ENCODE measurements at regions of chr14 and their contacts with region 1.

Region 1: GRCh38 chr14:89954070-89955028 is at the start of gene EFCAB11:
- DNase-seq: peak; percentile 80 to 98 (median 97)
- ATAC-seq: peak; percentile 90
- H3K4me3 ChIP-seq: peak within 1 kb of the TSS; percentile 72
- H3K4me3 Mint-ChIP-seq: peak within 1 kb of the TSS; percentile 74 to 98 (median 94)
- H3K27ac ChIP-seq: peak within 1 kb of the TSS; percentile 94
- H3K27ac Mint-ChIP-seq: peak within 1 kb of the TSS; percentile 82 to 98 (median 91)
- H3K4me1 ChIP-seq: peaks cover 16 to 21% of the 10 kb centered on the region in 2 donors
- H3K4me1 Mint-ChIP-seq: peaks cover 21 to 54% (median 43%) of the 10 kb centered on the region in 7 donors
- H3K27me3 ChIP-seq: no peaks in the 10 kb centered on the region
- H3K27me3 Mint-ChIP-seq: no peaks in the 10 kb centered on the region
- total RNA-seq, gene EFCAB11: 1.2 to 8.5 (median 1.9) TPM

Region 2: GRCh38 chr14:88385345-88386101 is 1568.8 kb before region 1 on chr14 and contains the start of gene SPATA7:
- CTCF ChIA-PET with region 1: no interaction called
- POLR2A ChIA-PET with region 1: no interaction called
- intact Hi-C with region 1: loop called in 1 of 2 experiments (anchors 10 kb)
- DNase-seq: peak; percentile 45 to 79 (median 62)
- ATAC-seq: peak; percentile 95
- H3K4me3 ChIP-seq: peak within 1 kb of the TSS; percentile 85
- H3K4me3 Mint-ChIP-seq: peak within 1 kb of the TSS; percentile 93 to 97 (median 94)
- H3K27ac ChIP-seq: peak within 1 kb of the TSS; percentile 75
- H3K27ac Mint-ChIP-seq: peak within 1 kb of the TSS; percentile 68 to 88 (median 83)
- H3K4me1 ChIP-seq: peaks cover 7 to 9% of the 10 kb centered on the region in 2 donors
- H3K4me1 Mint-ChIP-seq: peaks cover 6 to 29% (median 20%) of the 10 kb centered on the region in 7 donors
- H3K27me3 ChIP-seq: no peaks in the 10 kb centered on the region
- H3K27me3 Mint-ChIP-seq: peaks cover 0 to 23% (median 0%) of the 10 kb centered on the region in 5 donors
- total RNA-seq, gene SPATA7: 1.9 to 4.3 (median 2.5) TPM

Region 3: DNA sequence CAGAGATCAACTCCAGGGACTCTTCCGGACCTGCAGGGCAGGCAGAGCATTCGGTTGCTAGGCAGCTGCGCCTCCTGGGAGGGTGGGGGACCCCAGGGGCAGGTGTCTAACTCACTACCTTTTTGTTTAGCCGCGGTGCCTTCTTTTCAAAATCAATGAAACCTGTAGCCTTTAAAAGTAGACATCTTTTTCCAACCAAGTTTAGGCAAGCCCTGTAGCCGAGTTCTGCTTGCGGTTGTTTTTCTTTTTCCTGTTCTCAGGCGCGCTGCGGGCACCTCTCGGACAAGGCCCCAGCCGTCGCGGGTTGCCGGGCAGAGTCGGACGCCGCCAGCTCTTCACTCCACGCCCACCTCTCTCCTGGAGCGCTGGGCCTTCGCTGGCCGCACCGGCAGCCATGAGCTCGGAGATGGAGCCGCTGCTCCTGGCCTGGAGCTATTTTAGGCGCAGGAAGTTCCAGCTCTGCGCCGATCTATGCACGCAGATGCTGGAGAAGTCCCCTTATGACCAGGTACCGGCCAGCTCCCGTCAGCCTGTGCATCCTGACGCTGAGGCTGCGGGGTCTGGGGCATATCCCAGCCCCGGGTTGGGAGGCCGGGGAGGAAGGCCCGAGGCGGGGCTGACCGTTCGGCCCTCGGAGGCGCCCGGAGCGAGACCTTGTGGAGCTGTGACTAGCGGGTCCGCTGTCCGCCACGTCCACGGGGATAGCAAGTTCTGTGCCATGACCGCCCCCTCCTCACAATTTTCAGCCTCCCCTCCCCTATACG is 1129.9 kb before region 1 on chr14 and contains the start of gene TTC8:
- CTCF ChIA-PET with region 1: no interaction called
- POLR2A ChIA-PET with region 1: no interaction called
- intact Hi-C with region 1: loop called in 1 of 2 experiments (anchors 5 kb)
- DNase-seq: peak; percentile 75 to 92 (median 88)
- ATAC-seq: peak; percentile 98
- H3K4me3 ChIP-seq: peak within 1 kb of the TSS; percentile 74
- H3K4me3 Mint-ChIP-seq: peak within 1 kb of the TSS; percentile 72 to 98 (median 90)
- H3K27ac ChIP-seq: peak within 1 kb of the TSS; percentile 85
- H3K27ac Mint-ChIP-seq: peak within 1 kb of the TSS; percentile 97 to 99 (median 99)
- H3K4me1 ChIP-seq: peaks cover 5 to 6% of the 10 kb centered on the region in 2 donors
- H3K4me1 Mint-ChIP-seq: peaks cover 0 to 13% (median 11%) of the 10 kb centered on the region in 7 donors
- H3K27me3 ChIP-seq: no peaks in the 10 kb centered on the region
- H3K27me3 Mint-ChIP-seq: peaks cover 0 to 30% (median 8%) of the 10 kb centered on the region in 5 donors
- total RNA-seq, gene TTC8: 1.8 to 3.4 (median 2.1) TPM

Region 4: DNA sequence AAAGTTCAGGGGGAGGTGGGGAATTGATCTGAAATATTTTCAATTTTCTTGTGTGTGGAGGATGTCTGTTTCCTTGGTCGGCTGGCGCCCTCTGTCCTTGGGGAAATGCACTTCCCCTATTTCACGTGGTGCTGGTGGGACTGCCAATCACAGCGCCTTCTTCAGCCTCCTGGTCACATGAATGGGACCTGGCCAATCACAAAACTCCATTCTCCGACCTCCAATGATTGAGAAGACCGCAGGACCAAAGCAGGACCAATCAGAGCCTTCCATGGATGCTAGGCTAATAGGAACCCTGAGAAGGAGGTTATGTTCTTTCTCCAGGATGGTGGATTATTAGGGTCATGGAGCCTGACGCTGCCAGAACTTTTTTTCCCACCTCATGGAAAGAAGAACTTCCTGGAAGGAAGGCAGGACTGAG is 941.3 kb before region 1 on chr14:
- CTCF ChIA-PET with region 1: no interaction called
- POLR2A ChIA-PET with region 1: no interaction called
- intact Hi-C with region 1: no loop called
- DNase-seq: peak in 1 of 9 donors; percentile 12
- ATAC-seq: no peak
- H3K4me3 ChIP-seq: no peak overlapping the region
- H3K4me3 Mint-ChIP-seq: no peak overlapping the region
- H3K27ac ChIP-seq: no peak overlapping the region
- H3K27ac Mint-ChIP-seq: no peak overlapping the region
- H3K4me1 ChIP-seq: no peaks in the 10 kb centered on the region
- H3K4me1 Mint-ChIP-seq: peaks cover 0 to 4% (median 0%) of the 10 kb centered on the region in 7 donors
- H3K27me3 ChIP-seq: no peaks in the 10 kb centered on the region
- H3K27me3 Mint-ChIP-seq: peaks cover 14 to 24% (median 15%) of the 10 kb centered on the region in 5 donors

Region 5: GRCh38 chr14:89973234-89973823 is 19.0 kb after region 1 on chr14:
- CTCF ChIA-PET with region 1: interaction called, 17 read pairs
- POLR2A ChIA-PET with region 1: interaction called, 16 read pairs
- intact Hi-C with region 1: loop called (anchors 1 kb)
- DNase-seq: peak in 7 of 9 donors; percentile 21 to 44 (median 37)
- ATAC-seq: peak; percentile 76
- H3K4me3 ChIP-seq: no peak overlapping the region
- H3K4me3 Mint-ChIP-seq: no peak overlapping the region
- H3K27ac ChIP-seq: no peak overlapping the region
- H3K27ac Mint-ChIP-seq: no peak overlapping the region
- H3K4me1 ChIP-seq: no peaks in the 10 kb centered on the region
- H3K4me1 Mint-ChIP-seq: peaks cover 0 to 19% (median 3%) of the 10 kb centered on the region in 7 donors
- H3K27me3 ChIP-seq: no peaks in the 10 kb centered on the region
- H3K27me3 Mint-ChIP-seq: no peaks in the 10 kb centered on the region

Region 6: DNA sequence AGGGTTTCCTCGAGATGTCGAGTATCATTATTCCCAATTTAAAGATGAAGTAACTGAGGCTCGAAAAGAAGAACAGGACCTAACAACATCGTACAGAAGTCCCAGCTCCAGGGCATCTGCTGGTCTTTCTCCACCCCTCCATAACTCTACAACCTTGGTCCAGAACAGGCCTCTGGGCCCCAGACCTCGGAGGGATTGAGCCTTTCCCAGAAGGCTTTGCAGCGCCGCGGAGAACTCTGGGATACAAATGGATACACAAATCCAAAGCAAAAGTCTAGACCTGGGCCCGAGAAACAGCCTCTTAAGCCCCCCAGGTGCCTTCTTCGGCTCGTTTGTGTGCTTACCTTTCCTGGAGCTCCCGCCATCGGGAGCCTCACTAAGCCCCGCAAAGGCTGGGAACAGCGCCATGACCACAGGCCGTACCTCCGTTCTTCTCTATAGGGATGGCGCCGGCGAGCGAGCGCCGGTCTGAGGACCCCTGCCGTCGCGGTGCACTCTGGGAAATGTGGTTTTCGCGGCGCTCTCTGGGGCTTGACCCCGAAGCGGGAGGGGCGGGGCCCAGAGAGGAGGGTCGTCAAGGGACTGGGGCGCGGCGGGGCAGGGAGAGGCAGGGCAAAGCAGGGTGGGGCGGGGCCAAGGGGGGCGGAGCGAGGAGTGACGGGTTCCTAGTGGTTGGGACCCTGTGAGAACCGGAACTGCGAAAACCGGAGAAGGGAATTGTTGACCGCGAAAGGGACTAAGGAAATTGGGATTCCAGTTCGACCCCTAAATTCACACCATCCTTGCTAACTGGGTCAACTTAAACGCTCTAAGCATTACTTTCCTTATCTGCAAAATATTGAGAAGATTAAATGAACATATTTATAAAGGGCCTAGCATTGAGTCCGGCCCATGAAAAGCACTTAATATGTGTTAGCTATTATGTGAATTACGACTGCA is 377.4 kb after region 1 on chr14 and contains the start of gene NRDE2:
- CTCF ChIA-PET with region 1: no interaction called
- POLR2A ChIA-PET with region 1: no interaction called
- intact Hi-C with region 1: loop called (anchors 1 kb)
- DNase-seq: peak; percentile 74 to 95 (median 85)
- ATAC-seq: peak; percentile 99
- H3K4me3 ChIP-seq: peak within 1 kb of the TSS; percentile 91
- H3K4me3 Mint-ChIP-seq: peak within 1 kb of the TSS; percentile 90 to 95 (median 93)
- H3K27ac ChIP-seq: peak within 1 kb of the TSS; percentile 72
- H3K27ac Mint-ChIP-seq: peak within 1 kb of the TSS; percentile 86 to 97 (median 92)
- H3K4me1 ChIP-seq: peaks cover 0 to 9% of the 10 kb centered on the region in 2 donors
- H3K4me1 Mint-ChIP-seq: peaks cover 14 to 44% (median 38%) of the 10 kb centered on the region in 7 donors
- H3K27me3 ChIP-seq: no peaks in the 10 kb centered on the region
- H3K27me3 Mint-ChIP-seq: peaks cover 7 to 25% (median 9%) of the 10 kb centered on the region in 5 donors
- total RNA-seq, gene NRDE2: 23.6 to 30.2 (median 28.7) TPM

Region 7: DNA sequence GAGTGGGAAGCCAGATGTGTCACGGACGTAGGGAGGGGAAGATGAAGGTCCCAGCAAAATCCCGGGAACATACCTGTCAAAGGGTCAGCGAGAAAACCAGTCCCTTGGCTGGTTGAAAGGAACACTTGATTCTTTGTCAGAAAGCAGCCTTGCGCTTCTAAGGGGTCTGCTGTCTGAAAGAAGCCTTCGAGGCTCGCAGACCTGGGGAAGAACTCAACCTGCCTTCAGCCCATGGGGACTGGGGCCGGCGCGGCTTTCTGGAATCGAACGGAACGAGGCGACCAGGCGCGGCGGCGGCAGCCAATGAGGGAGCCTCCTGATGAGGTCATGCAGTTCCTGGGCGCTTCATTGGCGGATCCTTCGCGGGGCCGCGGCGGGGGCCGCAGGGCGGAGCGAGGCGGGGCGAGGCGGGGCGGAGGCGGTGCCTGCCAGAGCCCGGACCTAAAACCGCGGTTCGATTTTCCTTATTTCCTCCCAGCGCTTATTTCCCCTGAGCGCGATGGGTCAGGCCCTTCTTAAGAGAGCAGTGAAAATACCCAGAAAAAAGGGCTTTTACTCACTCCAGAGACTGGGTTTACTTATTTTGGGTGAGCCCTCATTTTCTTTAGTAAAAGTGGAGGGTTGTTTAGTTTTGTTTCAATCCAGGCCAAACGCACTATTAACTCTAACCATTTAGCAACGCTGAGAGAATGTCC is 873.7 kb after region 1 on chr14:
- CTCF ChIA-PET with region 1: no interaction called
- POLR2A ChIA-PET with region 1: no interaction called
- intact Hi-C with region 1: loop called (anchors 10 kb)
- DNase-seq: peak; percentile 83 to 94 (median 85)
- ATAC-seq: peak; percentile 100
- H3K4me3 ChIP-seq: peak overlapping the region; percentile 61
- H3K4me3 Mint-ChIP-seq: peak overlapping the region; percentile 69 to 91 (median 84)
- H3K27ac ChIP-seq: peak overlapping the region; percentile 69
- H3K27ac Mint-ChIP-seq: peak overlapping the region; percentile 79 to 96 (median 86)
- H3K4me1 ChIP-seq: peaks cover 14% of the 10 kb centered on the region in 2 donors
- H3K4me1 Mint-ChIP-seq: peaks cover 7 to 28% (median 18%) of the 10 kb centered on the region in 7 donors
- H3K27me3 ChIP-seq: no peaks in the 10 kb centered on the region
- H3K27me3 Mint-ChIP-seq: peaks cover 0 to 3% (median 0%) of the 10 kb centered on the region in 5 donors